CD4-positive, alpha-beta T cell (primary cell): ENCODE measurements at regions of chr5 and their contacts with region 1.

Region 1: GRCh38 chr5:99025298-99026045 is 96.7 kb upstream of the CHD1 start:
- DNase-seq: no peak
- ATAC-seq: no peak
- H3K4me3 ChIP-seq: no peak overlapping the region
- H3K4me3 Mint-ChIP-seq: no peak overlapping the region
- H3K27ac ChIP-seq: no peak overlapping the region
- H3K27ac Mint-ChIP-seq: no peak overlapping the region
- H3K4me1 ChIP-seq: peaks cover 16% of the 10 kb centered on the region
- H3K4me1 Mint-ChIP-seq: peaks cover 30% of the 10 kb centered on the region
- H3K27me3 ChIP-seq: no peaks in the 10 kb centered on the region
- H3K27me3 Mint-ChIP-seq: no peaks in the 10 kb centered on the region
- CTCF ChIP-seq: no peak

Region 2: GRCh38 chr5:98982880-98983279 is 42.6 kb before region 1 on chr5:
- CTCF ChIA-PET with region 1: no interaction called
- POLR2A ChIA-PET with region 1: no interaction called
- intact Hi-C with region 1: loop called in 1 of 2 experiments (anchors 1 kb)
- DNase-seq: no peak
- ATAC-seq: no peak
- H3K4me3 ChIP-seq: no peak overlapping the region
- H3K4me3 Mint-ChIP-seq: no peak overlapping the region
- H3K27ac ChIP-seq: no peak overlapping the region
- H3K27ac Mint-ChIP-seq: no peak overlapping the region
- H3K4me1 ChIP-seq: no peaks in the 10 kb centered on the region
- H3K4me1 Mint-ChIP-seq: peaks cover under 1% of the 10 kb centered on the region
- H3K27me3 ChIP-seq: no peaks in the 10 kb centered on the region
- H3K27me3 Mint-ChIP-seq: no peaks in the 10 kb centered on the region
- CTCF ChIP-seq: no peak

Region 3: GRCh38 chr5:99037668-99038067 is 12.2 kb after region 1 on chr5:
- CTCF ChIA-PET with region 1: interaction called, 4 read pairs
- POLR2A ChIA-PET with region 1: interaction called, 18 read pairs
- intact Hi-C with region 1: no loop called
- DNase-seq: peak; percentile 48 to 89 (median 67)
- ATAC-seq: peak; percentile 77
- H3K4me3 ChIP-seq: no peak overlapping the region
- H3K4me3 Mint-ChIP-seq: peak overlapping the region; percentile 79
- H3K27ac ChIP-seq: peak overlapping the region; percentile 35 to 45
- H3K27ac Mint-ChIP-seq: peak overlapping the region; percentile 93
- H3K4me1 ChIP-seq: peaks cover 26% of the 10 kb centered on the region
- H3K4me1 Mint-ChIP-seq: peaks cover 71% of the 10 kb centered on the region
- H3K27me3 ChIP-seq: no peaks in the 10 kb centered on the region
- H3K27me3 Mint-ChIP-seq: no peaks in the 10 kb centered on the region
- CTCF ChIP-seq: no peak